ENCODE measurements at regions of chr12 and their contacts with region 1.

Region 1: DNA sequence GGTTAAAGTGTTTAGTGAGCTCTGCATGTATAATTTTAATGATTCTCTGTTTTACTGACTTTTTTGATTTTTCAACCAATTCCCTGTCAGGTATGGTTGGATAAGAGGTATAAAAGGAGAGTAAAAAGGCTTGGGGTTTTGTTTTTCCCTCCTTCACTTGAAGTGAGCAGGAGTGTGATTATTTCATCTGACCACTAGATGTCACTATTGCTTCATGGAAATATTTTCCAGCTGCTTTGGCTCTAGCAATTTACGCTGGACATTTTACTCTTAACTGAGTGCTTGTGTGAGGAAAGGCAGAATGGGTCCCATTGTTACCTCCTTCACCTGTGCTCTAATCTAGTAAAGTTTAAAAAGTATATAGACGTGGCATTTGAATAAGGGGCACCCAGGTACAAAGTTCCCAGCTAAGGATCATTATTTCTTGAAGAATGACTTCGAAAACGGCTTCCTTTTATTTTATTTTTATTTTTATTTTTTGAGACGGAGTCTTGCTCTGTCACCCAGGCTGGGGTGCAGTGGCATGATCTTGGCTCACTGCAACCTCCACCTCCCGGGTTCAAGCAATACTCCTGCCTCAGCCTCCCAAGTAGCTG is 66.5 kb downstream of the TBC1D30 start:
- DNase-seq: no peak
- ATAC-seq: peak in 3 of 4 donors; percentile 55 to 84 (median 70)
- H3K4me3 ChIP-seq: no peak overlapping the region
- H3K27ac ChIP-seq: no peak overlapping the region
- H3K4me1 ChIP-seq: no peaks in the 10 kb centered on the region
- H3K27me3 ChIP-seq: peaks cover 0 to 3% (median 0%) of the 10 kb centered on the region in 3 donors
- CTCF ChIP-seq: peak; percentile 87

Region 2: GRCh38 chr12:65106948-65107347 is 216.0 kb after region 1 on chr12:
- intact Hi-C with region 1: loop called in 1 of 2 experiments (anchors 5 kb)
- DNase-seq: no peak
- ATAC-seq: no peak
- H3K4me3 ChIP-seq: no peak overlapping the region
- H3K27ac ChIP-seq: no peak overlapping the region
- H3K4me1 ChIP-seq: no peaks in the 10 kb centered on the region
- H3K27me3 ChIP-seq: peaks cover 0 to 4% (median 0%) of the 10 kb centered on the region in 3 donors
- CTCF ChIP-seq: no peak

Region 3: GRCh38 chr12:65232476-65233077 is 341.6 kb after region 1 on chr12:
- intact Hi-C with region 1: loop called (anchors 2 to 10 kb)
- DNase-seq: no peak
- ATAC-seq: no peak
- H3K4me3 ChIP-seq: no peak overlapping the region
- H3K27ac ChIP-seq: no peak overlapping the region
- H3K4me1 ChIP-seq: peaks cover 5% of the 10 kb centered on the region
- H3K27me3 ChIP-seq: no peaks in the 10 kb centered on the region
- CTCF ChIP-seq: peak; percentile 49

Region 4: GRCh38 chr12:66087365-66087943 is 1196.5 kb after region 1 on chr12:
- intact Hi-C with region 1: loop called (anchors 5 kb)
- DNase-seq: peak; percentile 39 to 56
- ATAC-seq: peak; percentile 59 to 81 (median 76)
- H3K4me3 ChIP-seq: no peak overlapping the region
- H3K27ac ChIP-seq: no peak overlapping the region
- H3K4me1 ChIP-seq: no peaks in the 10 kb centered on the region
- H3K27me3 ChIP-seq: no peaks in the 10 kb centered on the region
- CTCF ChIP-seq: peak; percentile 77

Region 5: DNA sequence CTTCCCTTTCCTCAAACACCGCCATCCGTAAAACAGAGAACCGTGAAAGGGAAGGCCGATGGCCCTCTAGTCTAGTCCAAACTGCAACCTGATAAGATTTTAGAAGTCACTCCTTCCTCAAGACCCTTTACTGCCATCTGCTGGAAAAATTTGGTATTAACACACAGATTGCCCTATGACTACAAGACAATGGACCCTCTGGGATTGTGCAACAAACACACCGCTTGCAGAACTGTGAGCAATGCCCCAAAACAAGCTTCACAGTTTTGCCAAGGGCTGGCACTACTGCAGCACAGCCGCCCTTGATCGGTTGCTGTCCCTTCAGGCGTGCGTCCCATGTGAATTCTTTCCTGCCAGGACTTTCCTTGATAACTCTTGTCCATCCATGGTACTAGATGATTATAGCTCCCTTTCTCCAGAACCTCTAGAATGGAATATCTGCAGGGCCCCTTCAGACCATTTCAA is 1216.5 kb after region 1 on chr12:
- intact Hi-C with region 1: loop called (anchors 5 kb)
- DNase-seq: peak; percentile 27 to 55
- ATAC-seq: peak; percentile 74 to 90 (median 87)
- H3K4me3 ChIP-seq: no peak overlapping the region
- H3K27ac ChIP-seq: no peak overlapping the region
- H3K4me1 ChIP-seq: no peaks in the 10 kb centered on the region
- H3K27me3 ChIP-seq: no peaks in the 10 kb centered on the region
- CTCF ChIP-seq: peak; percentile 82

Region 6: GRCh38 chr12:66860752-66861750 is 1970.1 kb after region 1 on chr12:
- intact Hi-C with region 1: loop called in 1 of 2 experiments (anchors 10 kb)
- DNase-seq: peak; percentile 35 to 52
- ATAC-seq: peak; percentile 46 to 63 (median 57)
- H3K4me3 ChIP-seq: no peak overlapping the region
- H3K27ac ChIP-seq: no peak overlapping the region
- H3K4me1 ChIP-seq: no peaks in the 10 kb centered on the region
- H3K27me3 ChIP-seq: peaks cover 0 to 6% (median 0%) of the 10 kb centered on the region in 3 donors
- CTCF ChIP-seq: peak; percentile 88

Measured in psoas muscle (tissue), 8 donors.